ENCODE measurements at regions of chr20 and their contacts with region 1.

Region 1: DNA sequence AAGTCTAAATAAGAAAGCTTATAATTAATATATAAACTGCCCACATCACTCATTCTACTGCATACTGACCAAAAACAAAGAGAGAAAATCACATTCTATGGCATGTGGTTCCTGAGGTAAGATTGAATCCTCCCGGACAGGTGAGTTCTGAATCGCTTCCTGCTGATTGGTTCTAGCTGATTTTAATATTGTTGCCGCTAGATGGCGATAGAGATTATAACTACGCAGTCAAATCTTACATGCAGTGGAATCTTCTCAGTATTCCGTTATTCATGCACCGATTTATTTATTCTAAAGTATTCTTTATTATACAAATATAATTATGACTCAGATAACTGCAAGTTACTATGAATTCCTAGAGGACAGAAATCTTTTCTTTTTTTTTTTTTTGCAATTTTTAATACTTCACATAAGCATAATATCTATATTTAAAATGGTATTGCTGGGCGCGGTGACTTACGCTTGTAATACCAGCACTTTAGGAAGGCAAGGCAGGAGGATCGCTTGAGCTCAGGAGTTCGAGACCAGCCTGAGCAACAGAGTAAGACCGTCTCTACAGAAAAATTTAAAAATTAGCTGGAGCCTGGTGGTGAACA is 24.2 kb upstream of the TMX4 start:
- DNase-seq: no peak
- H3K4me3 ChIP-seq: no peak overlapping the region
- H3K27me3 ChIP-seq: peaks cover 1% of the 10 kb centered on the region
- CTCF ChIP-seq: peak; percentile 61

Region 2: DNA sequence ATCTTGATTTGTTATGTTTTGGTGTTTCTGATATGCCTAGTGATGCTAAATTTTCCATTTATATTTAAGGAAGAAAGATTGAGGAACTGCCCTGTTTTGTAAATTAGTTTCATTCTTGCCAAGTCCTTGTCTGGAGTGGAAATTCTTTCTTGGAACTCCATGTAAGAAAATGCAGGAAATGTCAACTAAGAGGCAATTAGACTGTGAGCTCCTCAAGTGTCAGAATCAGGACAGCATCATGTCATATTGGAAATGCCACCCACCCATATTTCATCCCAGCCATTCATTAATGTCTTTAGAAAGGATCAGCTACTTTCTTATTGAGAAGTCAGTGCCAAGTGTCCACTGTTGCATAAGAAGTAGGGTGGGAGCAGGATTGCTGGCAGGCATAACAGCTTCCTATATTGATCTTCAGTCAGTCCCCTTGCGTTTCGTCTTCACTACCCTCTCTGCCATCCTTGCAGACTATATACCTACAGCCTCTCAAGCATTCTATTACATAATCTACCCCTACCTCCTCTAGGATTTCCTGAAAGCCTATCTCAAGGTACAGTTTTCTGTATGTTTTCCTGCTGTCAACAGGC is 145.9 kb before region 1 on chr20:
- CTCF ChIA-PET with region 1: no interaction called
- POLR2A ChIA-PET with region 1: no interaction called
- DNase-seq: no peak
- H3K4me3 ChIP-seq: no peak overlapping the region
- H3K27me3 ChIP-seq: no peaks in the 10 kb centered on the region; the same call in 1 of the 2 replicates
- CTCF ChIP-seq: no peak

Region 3: DNA sequence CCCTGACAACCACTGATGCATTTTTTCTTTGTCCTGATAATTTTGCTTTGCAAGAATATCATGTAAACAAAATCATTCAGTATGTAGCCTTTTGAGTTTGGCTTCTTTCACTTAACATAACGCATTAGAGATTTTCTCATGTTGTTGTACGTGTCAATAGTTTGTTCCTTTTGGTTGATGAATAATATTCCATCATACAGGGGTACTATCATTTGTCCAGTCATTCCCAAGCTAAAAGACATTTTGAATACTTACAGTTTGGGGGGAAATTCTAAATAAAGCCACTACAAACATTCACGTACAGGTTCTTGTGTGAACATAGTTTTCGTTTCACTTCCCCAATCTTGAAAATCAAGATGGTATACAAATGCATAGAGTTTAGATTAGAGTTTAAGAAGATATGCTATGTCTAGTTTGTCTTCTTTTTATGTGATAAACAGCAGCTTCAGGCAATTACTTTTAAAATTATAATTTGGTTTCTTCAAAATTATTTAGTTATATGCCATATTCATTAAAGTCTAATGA is 108.7 kb before region 1 on chr20:
- CTCF ChIA-PET with region 1: interaction called, 10 read pairs
- POLR2A ChIA-PET with region 1: no interaction called
- DNase-seq: no peak
- H3K4me3 ChIP-seq: no peak overlapping the region
- H3K27me3 ChIP-seq: no peaks in the 10 kb centered on the region; the same call in none of the 2 replicates
- CTCF ChIP-seq: no peak

Region 4: GRCh38 chr20:8019246-8019997 is 24.4 kb before region 1 on chr20 and contains the start of gene TMX4:
- CTCF ChIA-PET with region 1: interaction called, 13 read pairs
- POLR2A ChIA-PET with region 1: no interaction called
- DNase-seq: peak; percentile 75
- H3K4me3 ChIP-seq: peak within 1 kb of the TSS; percentile 86
- H3K27me3 ChIP-seq: no peaks in the 10 kb centered on the region
- CTCF ChIP-seq: peak; percentile 31; the same call in 1 of the 2 replicates
- polyA plus RNA-seq, gene TMX4: 11.3 and 18.4 TPM in 2 replicates

Region 5: GRCh38 chr20:8033151-8033841 is 10.5 kb before region 1 on chr20:
- CTCF ChIA-PET with region 1: interaction called, 10 read pairs
- POLR2A ChIA-PET with region 1: no interaction called
- DNase-seq: no peak
- H3K4me3 ChIP-seq: no peak overlapping the region
- H3K27me3 ChIP-seq: peaks cover 2% of the 10 kb centered on the region
- CTCF ChIP-seq: no peak

Region 6: DNA sequence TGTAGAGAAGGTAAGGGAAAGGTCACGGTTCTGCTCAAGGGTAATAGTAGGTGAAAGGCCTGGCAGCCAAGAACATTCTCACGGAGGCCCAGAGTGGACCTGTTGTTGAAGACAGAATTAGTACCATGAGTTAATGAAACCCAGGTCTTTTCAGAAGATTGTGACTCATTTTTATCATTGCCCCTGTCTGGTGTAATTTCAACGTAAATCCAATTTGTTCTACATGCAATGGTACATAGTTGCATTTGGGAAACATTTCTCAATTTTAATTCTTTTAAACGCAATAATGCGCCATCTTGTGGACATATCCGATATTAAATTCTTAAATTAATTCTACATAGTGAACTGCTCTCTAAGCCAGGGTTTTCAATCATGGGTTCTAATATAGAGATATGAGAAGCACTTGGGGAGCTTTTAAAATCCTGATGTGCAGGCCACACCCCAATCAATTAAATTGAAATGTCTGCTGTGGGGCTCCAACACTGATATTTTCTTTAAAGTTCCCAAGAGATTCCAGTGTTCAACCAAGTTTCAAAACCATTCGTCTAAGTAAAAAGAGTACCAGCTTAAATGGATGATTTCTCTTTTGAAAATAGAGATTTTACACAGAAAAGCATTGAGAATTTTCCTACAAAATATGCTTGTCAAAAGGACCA is 345.7 kb after region 1 on chr20:
- CTCF ChIA-PET with region 1: interaction called, 16 read pairs
- POLR2A ChIA-PET with region 1: no interaction called
- DNase-seq: no peak
- H3K4me3 ChIP-seq: no peak overlapping the region
- H3K27me3 ChIP-seq: no peaks in the 10 kb centered on the region
- CTCF ChIP-seq: peak; percentile 38

Region 7: GRCh38 chr20:8853805-8854338 is 810.1 kb after region 1 on chr20:
- CTCF ChIA-PET with region 1: no interaction called
- POLR2A ChIA-PET with region 1: no interaction called
- DNase-seq: no peak
- H3K4me3 ChIP-seq: no peak overlapping the region
- H3K27me3 ChIP-seq: no peaks in the 10 kb centered on the region
- CTCF ChIP-seq: peak; percentile 82